ENCODE measurements at regions of chr2 and their contacts with region 1.

Region 1: GRCh38 chr2:17851731-17852585 is 26.5 kb upstream of the KCNS3 start:
- DNase-seq: peak; percentile 46 to 51
- H3K4me3 ChIP-seq: no peak overlapping the region
- H3K27ac ChIP-seq: no peak overlapping the region
- H3K4me1 ChIP-seq: no peaks in the 10 kb centered on the region
- H3K27me3 ChIP-seq: no peaks in the 10 kb centered on the region
- CTCF ChIP-seq: peak; percentile 51 to 83 (median 72)
- POLR2A ChIP-seq: no peak

Region 2: GRCh38 chr2:17813742-17814473 is 38.0 kb before region 1 on chr2:
- intact Hi-C with region 1: no loop called
- DNase-seq: no peak
- H3K4me3 ChIP-seq: no peak overlapping the region
- H3K27ac ChIP-seq: no peak overlapping the region
- H3K4me1 ChIP-seq: no peaks in the 10 kb centered on the region
- H3K27me3 ChIP-seq: no peaks in the 10 kb centered on the region
- CTCF ChIP-seq: no peak
- POLR2A ChIP-seq: no peak

Region 3: DNA sequence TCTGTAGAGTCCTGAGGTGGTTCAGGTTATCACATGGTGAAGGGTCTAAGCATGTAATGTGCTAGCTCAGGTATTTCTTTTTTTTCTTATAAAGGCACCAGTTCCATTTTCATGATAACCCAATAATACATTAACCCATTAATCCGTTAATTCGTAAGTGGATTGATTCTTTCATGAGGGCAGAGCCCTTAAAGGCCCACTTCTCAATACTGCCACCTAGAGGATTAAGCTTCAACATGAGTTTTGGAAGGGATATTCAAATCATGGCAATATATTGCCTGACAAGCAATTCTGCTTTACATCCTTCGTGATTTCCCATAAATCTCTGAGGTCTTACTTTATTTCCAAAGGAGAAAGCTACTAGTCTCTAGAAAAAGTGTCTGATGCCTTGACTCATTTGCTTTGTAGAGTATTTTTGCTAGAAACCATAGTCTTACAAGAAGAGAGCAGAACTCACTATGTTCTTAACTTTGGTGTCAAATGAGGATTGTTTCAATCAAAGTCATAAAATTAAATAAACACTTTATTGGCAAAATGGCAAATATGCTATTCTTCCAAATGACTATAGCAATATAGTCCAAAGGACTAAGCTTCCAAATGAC is 297.8 kb after region 1 on chr2:
- intact Hi-C with region 1: loop called (anchors 10 kb)
- DNase-seq: no peak
- H3K4me3 ChIP-seq: no peak overlapping the region
- H3K27ac ChIP-seq: no peak overlapping the region
- H3K4me1 ChIP-seq: no peaks in the 10 kb centered on the region
- H3K27me3 ChIP-seq: no peaks in the 10 kb centered on the region
- CTCF ChIP-seq: peak; percentile 27 to 70 (median 44)
- POLR2A ChIP-seq: no peak

Region 4: DNA sequence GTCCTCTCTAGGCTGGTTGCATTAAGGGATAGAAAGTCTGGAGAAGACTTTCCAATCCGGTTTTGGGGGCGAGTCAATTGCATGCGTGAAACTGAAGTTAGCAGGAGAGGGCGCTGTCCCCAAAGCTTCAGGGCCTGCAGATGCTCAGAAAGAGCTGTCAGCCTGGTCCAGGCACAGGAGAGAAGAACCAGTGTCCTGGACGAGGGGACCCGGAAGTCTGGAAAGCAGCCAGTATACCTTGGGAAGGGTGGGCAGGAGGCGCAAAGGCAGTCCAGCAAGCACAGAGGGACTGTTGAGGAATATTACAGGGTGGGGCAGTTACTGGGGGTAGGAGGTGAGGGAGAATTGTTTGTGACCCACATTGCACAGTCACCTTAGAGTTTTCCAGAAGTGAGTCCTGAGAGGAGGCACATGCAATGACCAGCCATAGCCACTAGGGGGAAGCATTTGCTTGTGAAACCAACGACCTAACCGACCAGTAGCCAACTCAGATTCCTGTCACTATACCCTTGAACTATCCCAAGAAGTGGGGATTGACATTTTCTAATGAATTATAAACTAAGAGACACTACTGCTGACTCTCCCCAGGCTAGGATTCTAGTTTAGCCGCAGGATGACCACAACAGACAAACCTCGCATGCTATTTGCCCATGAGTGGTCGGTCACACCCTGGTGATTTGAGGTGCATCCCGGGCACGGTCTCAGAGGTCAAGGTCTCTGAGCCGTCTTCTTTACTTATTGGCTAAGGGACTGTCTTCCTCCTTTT is 535.7 kb after region 1 on chr2:
- intact Hi-C with region 1: loop called (anchors 10 kb)
- DNase-seq: peak; percentile 71
- H3K4me3 ChIP-seq: no peak overlapping the region
- H3K27ac ChIP-seq: no peak overlapping the region
- H3K4me1 ChIP-seq: no peaks in the 10 kb centered on the region
- H3K27me3 ChIP-seq: no peaks in the 10 kb centered on the region
- CTCF ChIP-seq: peak; percentile 71 to 97 (median 88)
- POLR2A ChIP-seq: no peak